Left colon (tissue), 2 donors: ENCODE measurements at regions of chr12 and their contacts with region 1.

Region 1: DNA sequence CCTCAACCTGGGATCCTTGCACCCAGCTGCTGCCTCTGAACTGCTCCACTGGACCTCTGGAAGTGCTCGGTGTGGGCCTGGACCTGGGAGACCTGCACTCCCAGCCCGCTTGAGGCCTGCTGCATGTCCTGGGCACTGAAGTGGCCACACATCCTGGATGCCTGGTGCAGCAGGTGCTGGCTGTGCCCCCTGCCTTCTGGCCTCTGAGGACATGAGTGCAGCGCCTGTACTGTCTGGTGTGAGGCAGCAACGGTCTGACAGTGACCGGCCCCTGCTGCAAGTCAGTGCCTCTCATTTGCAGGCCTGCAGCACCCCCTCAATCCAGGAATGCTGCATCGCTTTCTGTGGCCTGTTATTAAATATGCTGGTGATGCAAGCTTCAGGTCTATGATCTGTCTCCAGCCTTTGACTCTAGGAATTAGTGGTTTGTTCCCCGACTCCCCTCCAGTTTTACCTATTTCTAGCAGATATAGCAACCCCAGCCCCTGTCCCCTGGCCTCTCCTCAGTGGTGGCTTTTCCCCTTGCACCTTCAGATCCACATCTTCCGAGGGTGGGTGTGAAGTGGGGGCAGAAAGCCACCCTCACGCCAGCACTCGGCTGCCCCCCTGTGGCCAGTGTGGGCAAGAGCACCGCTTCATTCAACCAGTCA is 3.6 kb downstream of the SMIM41 start:
- DNase-seq: peak in 1 of 2 donors; percentile 54
- ATAC-seq: peak; percentile 44

Region 2: GRCh38 chr12:51832354-51833107 is 250.6 kb before region 1 on chr12:
- intact Hi-C with region 1: no loop called
- DNase-seq: no peak
- ATAC-seq: no peak

Region 3: GRCh38 chr12:52023182-52023975 is 59.7 kb before region 1 on chr12:
- intact Hi-C with region 1: loop called (anchors 5 to 10 kb)
- DNase-seq: peak; percentile 87 to 95
- ATAC-seq: peak; percentile 63